Right ventricle myocardium superior (tissue), 1 donor: ENCODE measurements at regions of chr10 and their contacts with region 1.

Region 1: GRCh38 chr10:59865101-59865500 is 41.3 kb downstream of the CCDC6 start:
- DNase-seq: no peak
- ATAC-seq: peak; percentile 83

Region 2: GRCh38 chr10:60032723-60033122 is 167.6 kb after region 1 on chr10:
- intact Hi-C with region 1: loop called (anchors 10 kb)
- DNase-seq: no peak
- ATAC-seq: peak; percentile 91